SK-N-SH (cell line): ENCODE measurements at regions of chr12 and their contacts with region 1.

Region 1: GRCh38 chr12:54214553-54215406 is 26.0 kb upstream of the SMUG1 start:
- DNase-seq: peak; percentile 92
- H3K4me3 ChIP-seq: peak overlapping the region; percentile 41 to 62
- H3K27ac ChIP-seq: no peak overlapping the region
- H3K4me1 ChIP-seq: peaks cover 0 to 16% of the 10 kb centered on the region in 2 experiments; a peak in 1 of 4 replicates
- H3K27me3 ChIP-seq: no peaks in the 10 kb centered on the region
- CTCF ChIP-seq: peak; percentile 99
- EP300 ChIP-seq: no peak
- RAD21 ChIP-seq: peak; percentile 62

Region 2: DNA sequence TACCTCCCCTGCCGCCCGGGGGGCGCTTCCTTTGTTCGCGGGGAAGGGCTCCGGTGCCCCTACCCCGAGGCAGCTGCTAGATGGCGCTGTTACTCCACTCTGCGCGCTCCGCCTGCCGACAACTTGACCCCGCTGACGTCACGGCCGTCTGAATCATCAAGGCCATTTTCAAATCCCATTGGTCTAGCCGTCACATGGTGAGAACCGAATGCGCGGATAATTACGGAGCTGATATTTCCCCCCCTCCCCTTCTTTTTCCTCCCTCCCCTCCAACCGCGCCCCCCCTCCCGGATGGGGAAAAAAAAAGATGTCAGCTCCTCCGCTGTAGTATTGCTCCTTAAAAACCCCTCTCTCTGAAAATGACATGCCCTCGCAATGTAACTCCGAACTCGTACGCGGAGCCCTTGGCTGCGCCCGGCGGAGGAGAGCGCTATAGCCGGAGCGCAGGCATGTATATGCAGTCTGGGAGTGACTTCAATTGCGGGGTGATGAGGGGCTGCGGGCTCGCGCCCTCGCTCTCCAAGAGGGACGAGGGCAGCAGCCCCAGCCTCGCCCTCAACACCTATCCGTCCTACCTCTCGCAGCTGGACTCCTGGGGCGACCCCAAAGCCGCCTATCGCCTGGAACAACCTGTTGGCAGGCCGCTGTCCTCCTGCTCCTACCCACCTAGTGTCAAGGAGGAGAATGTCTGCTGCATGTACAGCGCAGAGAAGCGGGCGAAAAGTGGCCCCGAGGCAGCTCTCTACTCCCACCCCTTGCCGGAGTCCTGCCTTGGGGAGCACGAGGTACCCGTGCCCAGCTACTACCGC is 229.7 kb before region 1 on chr12 and contains the start of gene HOXC10:
- CTCF ChIA-PET with region 1: interaction called, 194 read pairs
- POLR2A ChIA-PET with region 1: interaction called, 3 read pairs
- DNase-seq: peak; percentile 97
- H3K4me3 ChIP-seq: peak within 1 kb of the TSS; percentile 41 to 52; a peak in 3 of 4 replicates
- H3K27ac ChIP-seq: no peak within 1 kb of the TSS
- H3K4me1 ChIP-seq: peaks cover 0 to 12% of the 10 kb centered on the region in 2 experiments; a peak in 1 of 4 replicates
- H3K27me3 ChIP-seq: peaks cover 95% of the 10 kb centered on the region
- CTCF ChIP-seq: peak; percentile 80
- EP300 ChIP-seq: no peak
- RAD21 ChIP-seq: peak; percentile 88
- polyA plus RNA-seq, gene HOXC10: 0.03 and 0.08 TPM in 2 replicates

Region 3: GRCh38 chr12:54017878-54018467 is 196.8 kb before region 1 on chr12:
- CTCF ChIA-PET with region 1: interaction called, 432 read pairs
- POLR2A ChIA-PET with region 1: interaction called, 3 read pairs
- DNase-seq: peak; percentile 99
- H3K4me3 ChIP-seq: peak overlapping the region; percentile 69 to 85
- H3K27ac ChIP-seq: peak overlapping the region; percentile 89 to 99
- H3K4me1 ChIP-seq: peaks cover 7 to 36% of the 10 kb centered on the region in 2 experiments; a peak in 2 of 4 replicates
- H3K27me3 ChIP-seq: no peaks in the 10 kb centered on the region
- CTCF ChIP-seq: no peak
- EP300 ChIP-seq: peak in 1 of 2 experiments; percentile 30; a peak in 1 of 4 replicates
- RAD21 ChIP-seq: no peak

Region 4: GRCh38 chr12:54191550-54192022 is 23.2 kb before region 1 on chr12:
- CTCF ChIA-PET with region 1: interaction called, 80 read pairs
- POLR2A ChIA-PET with region 1: no interaction called
- DNase-seq: peak; percentile 83
- H3K4me3 ChIP-seq: peak overlapping the region in 1 of 2 experiments; percentile 46; a peak in 1 of 4 replicates
- H3K27ac ChIP-seq: no peak overlapping the region
- H3K4me1 ChIP-seq: peaks cover 17 to 50% of the 10 kb centered on the region in 2 experiments; a peak in 3 of 4 replicates
- H3K27me3 ChIP-seq: no peaks in the 10 kb centered on the region
- CTCF ChIP-seq: peak; percentile 82
- EP300 ChIP-seq: no peak
- RAD21 ChIP-seq: peak; percentile 94

Region 5: DNA sequence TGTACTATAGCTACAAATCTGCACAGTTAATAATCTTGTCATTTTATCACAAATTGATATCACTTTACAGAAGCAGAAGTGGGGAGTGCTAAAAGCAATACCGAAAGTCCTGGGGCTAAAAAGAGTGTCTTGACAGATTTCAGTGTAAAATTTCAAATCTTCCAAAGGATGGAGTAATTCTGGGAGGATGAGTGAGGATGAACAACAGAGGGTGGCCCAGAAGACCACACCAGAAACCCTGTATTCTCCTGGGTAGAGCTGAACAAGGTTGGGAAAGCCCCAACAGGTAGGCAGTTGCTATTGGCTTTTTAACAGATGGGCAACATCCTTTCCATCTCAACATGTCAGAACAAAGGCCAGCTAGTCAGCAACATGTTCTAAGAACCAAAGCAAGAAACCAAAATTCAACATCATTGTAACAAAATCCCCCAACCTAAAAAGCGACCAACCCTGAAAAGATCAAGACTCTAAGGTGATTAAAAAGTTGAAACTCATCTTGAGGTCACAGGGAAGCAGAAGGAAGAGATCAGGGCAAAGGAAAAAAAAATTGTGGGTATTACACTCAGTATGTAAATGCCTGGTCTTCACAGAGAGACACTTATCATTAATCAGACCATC is 26.3 kb after region 1 on chr12:
- CTCF ChIA-PET with region 1: interaction called, 12 read pairs
- POLR2A ChIA-PET with region 1: no interaction called
- DNase-seq: no peak
- H3K4me3 ChIP-seq: no peak overlapping the region
- H3K27ac ChIP-seq: no peak overlapping the region
- H3K4me1 ChIP-seq: no peaks in the 10 kb centered on the region
- H3K27me3 ChIP-seq: no peaks in the 10 kb centered on the region
- CTCF ChIP-seq: no peak
- EP300 ChIP-seq: no peak
- RAD21 ChIP-seq: no peak

Region 6: DNA sequence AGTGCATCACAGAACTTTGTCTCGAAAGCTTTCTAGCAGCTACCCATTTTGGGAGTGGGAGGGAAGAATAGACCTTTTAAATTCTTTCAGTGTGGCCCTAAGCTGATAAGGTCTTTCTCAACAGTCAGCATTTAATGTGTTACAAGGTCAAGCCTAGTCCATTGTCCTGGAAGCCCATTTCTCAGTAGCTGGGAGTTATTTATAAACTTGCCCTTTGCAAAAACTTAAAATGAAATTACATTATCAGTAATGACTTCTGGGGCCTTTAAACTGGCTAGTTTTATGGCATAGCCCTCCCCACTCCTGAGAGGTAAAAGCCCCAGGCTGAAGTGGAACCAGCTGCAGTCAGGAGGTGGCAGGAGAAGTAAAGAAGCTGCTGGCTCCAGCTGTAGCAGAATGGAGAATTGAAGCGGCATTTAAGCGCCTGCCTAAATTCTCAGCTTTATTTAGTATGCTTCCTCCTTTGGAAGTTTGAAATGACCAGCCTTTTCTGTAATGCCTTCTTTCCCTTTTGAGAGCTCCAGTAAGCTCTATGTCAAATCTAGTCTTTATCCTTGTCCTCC is 122.6 kb after region 1 on chr12:
- CTCF ChIA-PET with region 1: interaction called, 23 read pairs
- POLR2A ChIA-PET with region 1: no interaction called
- DNase-seq: no peak
- H3K4me3 ChIP-seq: no peak overlapping the region
- H3K27ac ChIP-seq: no peak overlapping the region; a peak in 1 of 4 replicates
- H3K4me1 ChIP-seq: peaks cover 0 to 5% of the 10 kb centered on the region in 2 experiments; a peak in 1 of 4 replicates
- H3K27me3 ChIP-seq: no peaks in the 10 kb centered on the region
- CTCF ChIP-seq: no peak
- EP300 ChIP-seq: peak in 1 of 2 experiments; percentile 22; a peak in 1 of 4 replicates
- RAD21 ChIP-seq: peak; percentile 65

Region 7: GRCh38 chr12:54368709-54369583 is 154.2 kb after region 1 on chr12:
- CTCF ChIA-PET with region 1: interaction called, 36 read pairs
- POLR2A ChIA-PET with region 1: no interaction called
- DNase-seq: peak; percentile 77
- H3K4me3 ChIP-seq: no peak overlapping the region
- H3K27ac ChIP-seq: no peak overlapping the region
- H3K4me1 ChIP-seq: peaks cover 11 to 26% of the 10 kb centered on the region in 2 experiments; a peak in 2 of 4 replicates
- H3K27me3 ChIP-seq: no peaks in the 10 kb centered on the region
- CTCF ChIP-seq: peak; percentile 84
- EP300 ChIP-seq: no peak
- RAD21 ChIP-seq: peak; percentile 90